Posterior vena cava (tissue), 2 donors: ENCODE measurements at regions of chr13 and their contacts with region 1.

Region 1: DNA sequence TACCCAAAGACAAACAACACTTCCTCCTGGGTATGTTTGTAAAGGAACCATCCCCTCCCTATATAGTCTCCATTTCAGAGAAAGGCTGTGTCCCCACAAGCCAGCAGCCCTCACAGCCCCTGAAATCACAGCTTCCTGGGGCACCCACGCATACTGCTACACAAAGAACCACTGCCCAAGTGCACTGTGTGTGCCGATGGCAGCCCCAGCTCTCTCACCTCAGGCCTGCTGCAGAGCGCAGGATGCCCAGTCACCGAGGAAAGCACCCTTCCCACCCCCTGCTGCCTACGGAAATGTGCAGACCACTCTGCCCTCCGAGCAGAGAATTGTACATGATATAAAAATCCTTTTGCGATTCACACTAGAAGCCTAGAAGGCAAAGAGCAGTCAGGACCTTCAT is 39.4 kb downstream of the SOHLH2 start:
- DNase-seq: no peak

Region 2: GRCh38 chr13:35573639-35574038 is 601.3 kb before region 1 on chr13:
- intact Hi-C with region 1: no loop called
- DNase-seq: no peak

Region 3: DNA sequence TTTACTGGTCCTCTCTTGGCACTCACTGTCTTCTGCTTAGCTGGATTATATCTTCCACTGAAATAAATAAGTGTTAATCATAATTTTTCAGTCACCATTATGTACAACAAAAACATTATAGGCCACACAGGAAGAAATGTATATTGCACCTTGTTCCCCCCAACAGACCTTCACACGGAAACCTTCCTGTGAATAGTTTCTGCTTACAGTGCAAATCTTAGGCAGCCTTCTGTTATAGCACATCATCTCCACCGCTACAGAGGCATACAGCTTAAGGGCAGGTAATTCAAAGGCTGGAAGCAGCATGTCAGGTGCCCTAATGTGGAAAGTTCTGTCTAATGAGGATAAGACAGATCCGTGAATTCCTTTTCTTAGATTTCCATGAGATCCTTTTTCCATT is 56.3 kb after region 1 on chr13:
- intact Hi-C with region 1: loop called in 1 of 2 experiments (anchors 2 kb)
- DNase-seq: no peak